ENCODE measurements at regions of chr4 and their contacts with region 1.

Region 1: GRCh38 chr4:95534032-95534431 is 14.7 kb downstream of the UNC5C start:
- DNase-seq: no peak
- H3K4me3 ChIP-seq: no peak overlapping the region
- H3K27ac ChIP-seq: no peak overlapping the region
- H3K4me1 ChIP-seq: peaks cover 3% of the 10 kb centered on the region
- H3K27me3 ChIP-seq: no peaks in the 10 kb centered on the region
- CTCF ChIP-seq: no peak

Region 2: DNA sequence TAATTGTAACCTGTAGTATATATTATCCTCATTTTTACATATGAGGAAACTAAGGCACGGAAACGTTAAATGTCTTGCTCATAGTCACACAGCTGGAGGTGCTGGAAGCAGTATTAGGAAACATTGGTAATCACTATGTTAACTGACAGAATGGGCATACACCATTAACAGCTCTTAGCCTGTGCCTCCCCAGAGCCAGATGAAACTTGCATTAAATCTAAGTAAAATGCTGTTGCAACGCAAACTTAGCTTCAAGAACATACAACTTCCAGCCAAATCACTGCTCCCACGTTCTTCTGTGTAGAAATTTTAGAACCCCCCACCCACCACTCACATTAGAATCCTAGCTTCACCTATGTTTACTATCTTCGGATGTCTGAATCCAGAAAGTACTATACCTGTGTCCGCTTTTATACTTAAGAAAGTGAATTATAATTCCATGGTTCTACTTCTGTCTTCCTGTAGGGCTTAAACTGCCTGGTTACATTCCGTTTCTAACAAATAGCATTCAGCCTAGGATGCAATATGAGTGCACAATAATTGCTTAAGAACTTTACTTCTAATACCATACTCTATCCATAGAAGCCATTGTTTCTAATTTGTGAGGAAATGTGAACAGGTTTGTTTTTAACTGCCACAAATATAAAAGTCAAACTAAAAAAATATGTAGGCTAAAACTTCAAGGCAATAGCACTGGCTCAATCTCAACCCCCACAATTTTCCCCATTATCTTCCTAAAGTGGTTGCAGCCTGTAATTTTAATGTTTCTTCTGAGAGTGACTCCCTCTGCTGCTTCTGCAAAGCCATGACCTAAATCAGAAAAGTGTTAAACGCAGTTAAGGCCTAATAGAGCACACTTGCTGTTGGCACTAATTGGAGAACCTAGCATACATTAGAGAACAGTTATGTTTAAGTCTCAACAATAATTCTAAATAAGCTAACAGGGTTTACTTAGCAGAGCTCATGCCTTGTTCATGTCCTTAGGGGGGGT is 10.4 kb after region 1 on chr4:
- CTCF ChIA-PET with region 1: no interaction called
- dilution Hi-C with region 1: no loop called
- in situ Hi-C with region 1: no loop called
- intact Hi-C with region 1: loop called (anchors 1 kb)
- DNase-seq: peak; percentile 51
- H3K4me3 ChIP-seq: peak overlapping the region in 1 of 3 experiments; percentile 51
- H3K27ac ChIP-seq: peak overlapping the region; percentile 15
- H3K4me1 ChIP-seq: peaks cover 1% of the 10 kb centered on the region
- H3K27me3 ChIP-seq: peaks cover 19% of the 10 kb centered on the region
- CTCF ChIP-seq: peak; percentile 11 to 45